Right ventricle myocardium inferior (tissue), 1 donor: ENCODE measurements at regions of chr15 and their contacts with region 1.

Region 1: DNA sequence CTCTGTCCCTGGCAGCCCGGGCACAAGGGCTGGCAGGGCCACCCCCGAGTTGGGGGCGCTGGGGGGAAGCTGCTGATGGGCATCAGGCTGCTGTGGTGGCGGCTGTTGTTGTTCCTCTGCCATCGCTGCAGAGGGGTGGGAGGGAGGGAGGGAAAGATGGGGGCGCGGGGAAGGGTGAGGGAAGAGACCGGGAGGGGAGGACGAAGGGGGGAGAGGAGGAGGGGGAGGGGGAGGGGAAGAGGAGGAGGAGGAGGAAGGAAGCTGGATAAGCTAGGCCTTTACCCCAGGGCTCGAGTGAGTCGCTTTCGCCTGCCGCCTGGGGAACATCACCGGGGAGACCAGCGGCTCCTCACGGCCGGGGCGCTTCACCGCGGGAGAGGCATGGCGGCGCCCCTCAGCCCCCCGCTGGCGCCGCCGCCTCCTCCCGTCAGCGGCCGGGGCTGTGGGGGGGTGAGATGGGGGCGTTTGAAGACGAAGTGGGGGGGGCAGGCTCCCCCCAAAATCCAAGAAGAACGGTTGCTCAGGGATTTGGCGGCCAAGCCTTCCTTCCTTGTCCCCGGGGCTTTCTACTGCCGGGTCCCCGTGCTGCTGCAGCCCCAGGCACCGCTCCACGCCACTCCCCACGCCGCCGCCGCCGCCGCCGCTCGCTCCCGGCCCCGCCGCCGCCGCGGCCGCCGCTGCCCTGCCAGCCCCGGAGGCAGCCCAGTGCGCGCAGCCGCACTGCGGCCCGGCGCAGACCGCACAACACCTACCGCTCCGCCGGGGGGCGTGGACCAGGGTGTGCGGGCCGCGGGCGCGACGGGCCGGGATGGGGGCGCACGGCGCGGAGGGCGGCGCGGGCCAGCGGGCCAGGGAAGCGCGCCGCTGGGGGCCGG is at the start of gene RFX7:
- DNase-seq: peak; percentile 90
- ATAC-seq: peak; percentile 91
- total RNA-seq, gene RFX7: 5.8 TPM

Region 2: GRCh38 chr15:55775316-55775715 is 468.1 kb before region 1 on chr15:
- intact Hi-C with region 1: no loop called
- DNase-seq: no peak
- ATAC-seq: no peak

Region 3: DNA sequence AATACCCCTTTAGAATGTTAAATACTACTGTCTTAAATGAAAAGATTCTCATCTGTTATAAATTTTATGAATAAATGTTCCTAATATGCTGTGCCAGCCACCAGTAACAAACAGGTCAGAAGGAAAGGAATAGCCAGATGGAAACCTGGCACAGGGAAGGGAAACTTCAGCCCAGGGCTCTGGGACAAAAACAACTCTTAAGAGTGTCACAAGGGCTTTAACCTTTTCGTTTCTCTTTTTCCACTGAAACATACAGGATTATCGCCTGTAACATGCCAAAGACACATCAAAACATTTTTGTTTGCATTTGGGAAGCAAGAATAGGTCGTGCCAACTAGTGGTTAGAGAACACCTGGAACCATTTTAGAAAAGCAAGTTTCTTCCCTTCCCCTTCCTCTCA is 141.0 kb before region 1 on chr15:
- intact Hi-C with region 1: loop called (anchors 5 kb)
- DNase-seq: no peak
- ATAC-seq: peak; percentile 69